Panc1 (cell line): ENCODE measurements at regions of chr2 and their contacts with region 1.

Region 1: DNA sequence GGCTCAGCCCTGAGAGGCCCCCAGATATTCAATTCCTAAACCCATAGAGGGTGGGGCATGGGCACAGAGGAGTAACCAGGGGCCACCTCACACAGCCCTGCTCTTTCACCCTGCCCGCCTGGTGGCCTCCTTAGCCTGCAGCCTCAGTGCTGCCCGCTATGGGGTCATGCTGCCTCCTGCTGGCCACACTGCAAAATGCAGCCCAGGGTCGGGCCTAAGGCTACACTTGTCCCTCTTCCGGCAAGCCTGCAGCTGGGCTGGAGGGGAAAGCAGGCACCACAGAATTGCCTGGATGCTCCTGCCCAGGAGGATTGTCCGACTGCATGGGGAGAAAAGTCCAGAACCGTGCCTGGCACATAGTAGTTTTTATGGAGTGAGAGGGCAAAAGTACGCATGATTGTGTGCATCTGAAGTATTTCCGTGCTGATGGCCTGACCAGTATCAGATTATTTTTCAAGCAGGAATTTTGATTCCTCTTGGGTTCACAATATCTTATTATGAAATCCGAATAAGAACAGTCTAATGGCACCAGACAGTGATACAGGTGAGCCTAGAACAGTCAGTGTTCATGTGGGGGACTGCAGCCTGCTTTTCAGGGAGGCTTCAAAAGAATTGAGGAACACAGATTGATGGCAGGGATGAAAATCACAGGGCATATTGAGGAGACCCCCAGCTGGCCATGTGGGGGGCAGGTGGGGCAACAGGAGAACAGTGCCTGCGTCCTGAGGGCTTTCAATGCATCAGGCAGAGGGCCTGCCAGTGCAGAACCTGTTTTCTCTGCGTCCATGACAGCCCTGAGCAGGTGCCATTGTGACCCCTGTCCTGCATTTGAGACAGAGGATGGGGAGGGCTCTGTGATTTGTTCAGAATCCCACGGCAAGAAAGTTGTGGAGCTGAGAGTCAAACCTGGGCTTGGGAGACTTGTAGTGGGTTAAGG is 51.2 kb upstream of the ALPP start:
- DNase-seq: peak; percentile 33
- ATAC-seq: peak; percentile 78
- H3K4me3 ChIP-seq: no peak overlapping the region
- H3K27ac ChIP-seq: no peak overlapping the region
- H3K4me1 ChIP-seq: peaks cover 7% of the 10 kb centered on the region
- H3K27me3 ChIP-seq: no peaks in the 10 kb centered on the region
- CTCF ChIP-seq: peak; percentile 97

Region 2: GRCh38 chr2:231900486-231900942 is 426.9 kb before region 1 on chr2:
- CTCF ChIA-PET with region 1: interaction called, 3 read pairs
- POLR2A ChIA-PET with region 1: no interaction called
- in situ Hi-C with region 1: no loop called
- intact Hi-C with region 1: loop called (anchors 5 kb)
- DNase-seq: peak; percentile 35
- ATAC-seq: peak; percentile 99
- H3K4me3 ChIP-seq: no peak overlapping the region
- H3K27ac ChIP-seq: no peak overlapping the region
- H3K4me1 ChIP-seq: 0 out of 2 replicates have a peak, but pooled peaks cover 6% of the 10 kb centered on the region
- H3K27me3 ChIP-seq: no peaks in the 10 kb centered on the region
- CTCF ChIP-seq: peak; percentile 99

Region 3: GRCh38 chr2:231925303-231926179 is 401.8 kb before region 1 on chr2:
- CTCF ChIA-PET with region 1: interaction called, 3 read pairs
- POLR2A ChIA-PET with region 1: no interaction called
- in situ Hi-C with region 1: no loop called
- intact Hi-C with region 1: loop called (anchors 2 kb)
- DNase-seq: no peak
- ATAC-seq: peak; percentile 89
- H3K4me3 ChIP-seq: peak overlapping the region; percentile 45 to 52
- H3K27ac ChIP-seq: no peak overlapping the region
- H3K4me1 ChIP-seq: peaks cover 4% of the 10 kb centered on the region; the same call in 1 of the 2 replicates
- H3K27me3 ChIP-seq: no peaks in the 10 kb centered on the region; the same call in 1 of the 2 replicates
- CTCF ChIP-seq: peak; percentile 95

Region 4: DNA sequence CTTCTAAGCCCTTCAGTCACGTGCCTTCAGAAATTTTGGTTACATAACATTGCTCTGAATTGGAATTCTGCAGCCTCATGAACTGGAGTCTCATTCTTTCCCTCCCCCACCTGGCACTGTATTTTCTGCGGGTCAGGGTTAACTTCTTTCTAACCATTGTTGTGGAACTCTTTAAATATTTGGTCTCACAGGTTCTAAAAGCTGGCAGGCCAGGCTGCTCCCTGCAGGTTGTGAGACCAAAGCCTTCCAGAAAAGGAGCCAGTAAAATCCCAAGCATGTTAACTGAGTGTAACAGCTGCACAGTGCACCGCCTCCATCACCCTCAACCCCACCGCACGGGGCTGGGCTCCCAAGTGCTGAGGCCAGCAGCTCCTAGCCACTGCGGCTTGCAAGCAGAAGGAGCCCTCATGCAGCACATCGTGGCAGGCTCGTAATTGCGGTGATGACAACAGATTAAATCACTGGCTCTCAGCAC is 122.9 kb before region 1 on chr2:
- CTCF ChIA-PET with region 1: no interaction called
- POLR2A ChIA-PET with region 1: no interaction called
- in situ Hi-C with region 1: no loop called
- intact Hi-C with region 1: no loop called
- DNase-seq: no peak
- ATAC-seq: no peak
- H3K4me3 ChIP-seq: no peak overlapping the region
- H3K27ac ChIP-seq: no peak overlapping the region
- H3K4me1 ChIP-seq: no peaks in the 10 kb centered on the region
- H3K27me3 ChIP-seq: no peaks in the 10 kb centered on the region
- CTCF ChIP-seq: no peak